ENCODE measurements at regions of chr14 and their contacts with region 1.

Region 1: GRCh38 chr14:57066887-57067513 is 201.7 kb downstream of the EXOC5 start:
- DNase-seq: peak; percentile 2
- ATAC-seq: peak; percentile 66; the same call in 1 of the 2 replicates
- H3K4me3 ChIP-seq: no peak overlapping the region
- H3K27ac ChIP-seq: no peak overlapping the region
- H3K4me1 ChIP-seq: no peaks in the 10 kb centered on the region
- H3K27me3 ChIP-seq: no peaks in the 10 kb centered on the region; the same call in none of the 2 replicates
- CTCF ChIP-seq: peak; percentile 83

Region 2: DNA sequence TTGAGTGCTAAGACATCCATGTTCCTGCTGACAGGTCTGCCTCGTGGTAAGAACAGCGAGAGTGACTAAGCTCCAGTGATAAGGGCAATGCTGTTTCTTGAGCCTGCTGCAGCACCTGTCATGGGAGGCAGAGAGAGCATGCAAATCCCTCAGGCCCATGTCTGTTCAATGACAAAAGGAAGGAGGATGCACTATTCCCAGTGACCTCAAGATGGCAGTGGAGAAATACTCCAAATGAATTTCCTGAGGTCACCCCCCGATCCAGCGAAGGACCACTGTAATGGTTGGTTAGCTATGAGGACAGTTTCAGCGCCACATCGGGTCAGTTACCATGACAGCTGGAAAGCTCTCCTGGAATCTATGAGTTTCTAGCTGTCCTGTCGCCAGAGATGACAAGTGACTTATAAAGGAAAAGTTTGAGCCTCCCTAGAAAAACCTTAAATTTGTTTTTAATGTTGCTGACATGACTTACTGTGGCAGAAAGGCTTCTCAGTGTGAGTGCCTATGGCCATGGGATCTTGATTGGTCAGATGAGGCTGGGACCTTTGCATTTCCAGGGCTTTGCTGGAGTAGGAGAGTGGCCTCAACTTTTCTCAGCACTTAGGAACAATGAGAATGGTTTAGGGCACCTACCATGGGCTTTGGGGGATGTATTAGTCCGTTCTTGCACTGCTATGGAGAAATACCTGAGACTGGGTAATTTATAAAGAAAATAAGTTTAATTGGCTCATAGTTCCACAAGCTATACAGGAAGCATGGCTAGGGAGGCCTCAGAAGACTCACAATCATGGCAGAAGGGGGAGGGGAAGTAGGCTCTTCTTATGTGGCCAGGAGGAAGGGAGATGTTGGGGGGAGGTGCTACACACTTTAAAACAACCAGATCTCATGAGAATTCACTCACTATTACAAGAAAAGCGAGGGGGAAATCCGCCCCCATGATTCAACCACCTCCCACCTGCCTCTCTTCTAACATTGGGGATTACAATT is 575.4 kb before region 1 on chr14:
- CTCF ChIA-PET with region 1: no interaction called
- POLR2A ChIA-PET with region 1: no interaction called
- in situ Hi-C with region 1: no loop called
- intact Hi-C with region 1: loop called (anchors 10 kb)
- DNase-seq: peak; percentile 35
- ATAC-seq: 0 out of 2 replicates have a peak, but pooled peaks have one; percentile 63
- H3K4me3 ChIP-seq: no peak overlapping the region
- H3K27ac ChIP-seq: no peak overlapping the region
- H3K4me1 ChIP-seq: no peaks in the 10 kb centered on the region
- H3K27me3 ChIP-seq: no peaks in the 10 kb centered on the region
- CTCF ChIP-seq: peak; percentile 74

Region 3: DNA sequence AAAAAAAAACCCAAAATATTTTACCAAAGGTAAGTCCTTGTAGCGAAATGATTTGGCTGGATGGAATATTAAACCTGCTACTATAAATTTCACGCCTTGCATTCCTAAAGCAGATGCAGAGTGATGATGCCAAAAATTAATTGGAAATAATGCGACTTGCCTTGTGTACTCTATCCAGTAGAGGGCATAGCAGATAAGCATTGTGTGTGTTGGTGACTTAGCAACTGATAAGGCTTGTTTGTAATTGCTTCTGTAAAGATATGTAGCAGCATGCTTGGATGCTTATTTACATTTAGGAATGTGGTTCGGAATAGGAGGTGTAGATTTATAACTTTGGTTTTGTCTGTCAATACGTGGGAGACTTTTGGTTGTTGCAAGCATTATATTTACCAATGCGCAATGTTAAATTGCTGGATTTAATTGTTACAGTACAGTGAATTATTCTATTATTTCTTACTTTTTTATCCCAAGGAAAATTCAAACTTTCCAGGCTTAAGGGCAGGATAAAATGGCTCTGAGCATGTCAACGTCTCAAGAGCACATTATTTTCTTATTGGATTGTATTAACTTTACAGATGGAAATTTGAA is 406.9 kb before region 1 on chr14:
- CTCF ChIA-PET with region 1: interaction called, 12 read pairs
- POLR2A ChIA-PET with region 1: no interaction called
- in situ Hi-C with region 1: no loop called
- intact Hi-C with region 1: loop called (anchors 10 kb)
- DNase-seq: peak; percentile 5
- ATAC-seq: 0 out of 2 replicates have a peak, but pooled peaks have one; percentile 70
- H3K4me3 ChIP-seq: no peak overlapping the region
- H3K27ac ChIP-seq: no peak overlapping the region
- H3K4me1 ChIP-seq: no peaks in the 10 kb centered on the region
- H3K27me3 ChIP-seq: no peaks in the 10 kb centered on the region; the same call in 1 of the 2 replicates
- CTCF ChIP-seq: peak; percentile 64; the same call in 1 of the 2 replicates

Region 4: GRCh38 chr14:56874375-56874774 is 192.6 kb before region 1 on chr14:
- CTCF ChIA-PET with region 1: no interaction called
- POLR2A ChIA-PET with region 1: no interaction called
- in situ Hi-C with region 1: no loop called
- intact Hi-C with region 1: no loop called
- DNase-seq: peak; percentile 5
- ATAC-seq: no peak
- H3K4me3 ChIP-seq: no peak overlapping the region
- H3K27ac ChIP-seq: no peak overlapping the region
- H3K4me1 ChIP-seq: no peaks in the 10 kb centered on the region
- H3K27me3 ChIP-seq: no peaks in the 10 kb centered on the region
- CTCF ChIP-seq: peak; percentile 46

Region 5: DNA sequence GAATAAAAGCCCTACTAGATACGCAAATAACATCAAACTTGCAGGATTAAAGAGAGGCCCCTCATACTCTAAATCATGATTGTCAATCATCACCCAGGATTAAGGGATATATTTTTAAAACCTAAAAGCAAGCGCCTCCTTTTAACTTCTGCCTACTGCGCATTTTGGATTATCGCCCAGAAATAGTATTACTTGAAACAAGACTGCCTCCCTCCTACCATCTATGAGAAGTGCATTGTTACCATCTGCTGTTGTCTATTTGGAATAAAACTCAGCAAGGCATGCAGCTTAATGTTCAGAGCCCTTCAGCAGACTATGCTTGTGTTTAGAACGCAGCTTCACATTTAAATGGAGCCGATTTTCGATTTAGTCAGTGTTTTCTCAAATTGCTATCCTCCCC is 122.1 kb after region 1 on chr14:
- CTCF ChIA-PET with region 1: no interaction called
- POLR2A ChIA-PET with region 1: no interaction called
- in situ Hi-C with region 1: no loop called
- intact Hi-C with region 1: loop called (anchors 5 kb)
- DNase-seq: no peak
- ATAC-seq: no peak
- H3K4me3 ChIP-seq: no peak overlapping the region
- H3K27ac ChIP-seq: no peak overlapping the region
- H3K4me1 ChIP-seq: no peaks in the 10 kb centered on the region
- H3K27me3 ChIP-seq: peaks cover 7% of the 10 kb centered on the region
- CTCF ChIP-seq: peak; percentile 34; the same call in 1 of the 2 replicates

Region 6: GRCh38 chr14:57317316-57317715 is 250.3 kb after region 1 on chr14:
- CTCF ChIA-PET with region 1: no interaction called
- POLR2A ChIA-PET with region 1: no interaction called
- in situ Hi-C with region 1: no loop called
- intact Hi-C with region 1: loop called (anchors 10 kb)
- DNase-seq: peak; percentile 43
- ATAC-seq: peak; percentile 80
- H3K4me3 ChIP-seq: no peak overlapping the region
- H3K27ac ChIP-seq: no peak overlapping the region
- H3K4me1 ChIP-seq: no peaks in the 10 kb centered on the region
- H3K27me3 ChIP-seq: no peaks in the 10 kb centered on the region; the same call in 1 of the 2 replicates
- CTCF ChIP-seq: peak; percentile 79

Measured in Panc1 (cell line).